ENCODE measurements at regions of chr17 and their contacts with region 1.

Region 1: GRCh38 chr17:7915611-7916382 is at the start of gene RNF227:
- DNase-seq: peak; percentile 94
- ATAC-seq: peak; percentile 87
- H3K4me3 Mint-ChIP-seq: peak within 1 kb of the TSS; percentile 85
- H3K27ac Mint-ChIP-seq: peak within 1 kb of the TSS; percentile 87
- H3K4me1 Mint-ChIP-seq: peaks cover 22% of the 10 kb centered on the region
- H3K27me3 Mint-ChIP-seq: no peaks in the 10 kb centered on the region
- CTCF ChIP-seq: no peak
- total RNA-seq, gene RNF227: 5.1 to 5.2 TPM

Region 2: GRCh38 chr17:7903154-7904103 is 12.4 kb before region 1 on chr17:
- CTCF ChIA-PET with region 1: interaction called, 10 read pairs
- POLR2A ChIA-PET with region 1: interaction called, 5 read pairs
- intact Hi-C with region 1: no loop called
- DNase-seq: no peak
- ATAC-seq: no peak
- H3K4me3 Mint-ChIP-seq: no peak overlapping the region
- H3K27ac Mint-ChIP-seq: no peak overlapping the region
- H3K4me1 Mint-ChIP-seq: no peaks in the 10 kb centered on the region
- H3K27me3 Mint-ChIP-seq: no peaks in the 10 kb centered on the region
- CTCF ChIP-seq: no peak

Region 3: DNA sequence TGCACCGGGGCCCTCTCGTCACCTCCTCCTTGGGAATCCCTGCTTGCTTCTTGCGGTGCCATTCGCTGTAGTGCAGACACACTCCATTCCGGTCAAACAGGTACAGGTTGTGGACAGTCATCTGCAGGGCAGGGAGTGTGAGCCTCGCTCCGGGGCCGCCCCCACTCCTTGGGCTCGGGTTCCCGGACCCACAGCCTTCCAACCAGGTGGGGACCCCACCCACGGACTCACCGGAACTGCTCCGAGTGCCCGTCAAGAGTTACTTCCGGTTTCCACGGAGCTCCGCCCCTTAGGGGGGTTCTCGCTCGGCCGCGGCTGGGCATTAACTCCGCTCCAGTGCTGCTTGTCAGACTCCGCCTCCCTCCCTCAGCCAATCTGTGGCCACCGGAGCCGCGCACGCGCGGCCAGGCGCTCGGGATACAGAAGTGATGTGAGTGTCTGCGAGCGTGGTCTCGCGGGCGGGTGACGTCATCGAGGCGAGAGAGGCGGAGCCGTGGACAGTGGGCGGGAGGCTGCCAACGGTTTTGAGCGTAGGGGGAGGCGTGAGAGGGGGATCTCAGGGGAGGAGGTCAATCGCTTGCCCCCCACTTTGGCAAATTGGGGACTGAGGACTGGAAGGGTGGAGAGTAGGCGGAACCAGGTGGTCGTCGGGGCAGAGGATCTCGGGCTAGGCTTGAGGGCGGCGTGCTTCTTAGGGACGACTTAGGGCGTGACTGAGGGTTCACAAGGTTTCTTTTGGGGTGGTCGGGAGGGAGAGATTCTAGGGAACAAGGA is 16.1 kb after region 1 on chr17 and contains the starts of genes CNTROB and TRAPPC1:
- CTCF ChIA-PET with region 1: interaction called, 11 read pairs
- POLR2A ChIA-PET with region 1: interaction called, 23 read pairs
- intact Hi-C with region 1: no loop called
- DNase-seq: peak; percentile 99
- ATAC-seq: peak; percentile 99
- H3K4me3 Mint-ChIP-seq: peak within 1 kb of the TSS; percentile 87
- H3K27ac Mint-ChIP-seq: peak within 1 kb of the TSS; percentile 94
- H3K4me1 Mint-ChIP-seq: peaks cover 40% of the 10 kb centered on the region
- H3K27me3 Mint-ChIP-seq: no peaks in the 10 kb centered on the region
- CTCF ChIP-seq: no peak
- total RNA-seq, gene CNTROB: 48.4 to 54.1 TPM
- total RNA-seq, gene TRAPPC1: 140 to 143 TPM

Region 4: DNA sequence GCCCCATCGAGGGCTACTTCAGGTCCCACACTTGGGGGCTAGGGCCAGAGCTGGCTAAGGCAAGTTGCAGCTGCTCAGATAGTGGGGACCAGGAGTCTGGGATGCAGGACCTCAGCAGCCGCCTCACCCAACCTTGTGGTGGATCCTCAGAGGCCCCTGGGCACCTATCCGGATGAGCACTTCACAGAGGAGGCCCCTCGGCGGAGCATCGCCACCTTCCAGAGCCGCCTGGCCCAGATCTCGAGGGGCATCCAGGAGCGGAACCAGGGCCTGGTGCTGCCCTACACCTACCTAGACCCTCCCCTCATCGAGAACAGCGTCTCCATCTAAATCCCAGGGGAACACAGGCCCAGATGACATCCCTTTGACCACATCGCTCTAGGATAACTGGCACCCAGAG is 132.4 kb after region 1 on chr17:
- CTCF ChIA-PET with region 1: no interaction called
- POLR2A ChIA-PET with region 1: no interaction called
- intact Hi-C with region 1: no loop called
- DNase-seq: no peak
- ATAC-seq: no peak
- H3K4me3 Mint-ChIP-seq: no peak overlapping the region
- H3K27ac Mint-ChIP-seq: no peak overlapping the region
- H3K4me1 Mint-ChIP-seq: no peaks in the 10 kb centered on the region
- H3K27me3 Mint-ChIP-seq: no peaks in the 10 kb centered on the region
- CTCF ChIP-seq: no peak